Heart left ventricle (tissue), 16 donors: ENCODE measurements at regions of chr5 and their contacts with region 1.

Region 1: GRCh38 chr5:54844905-54845566 is 140.4 kb downstream of the ESM1 start:
- DNase-seq: no peak
- ATAC-seq: peak in 3 of 4 donors; percentile 34 to 52 (median 36)
- H3K4me3 ChIP-seq: peak overlapping the region in 9 of 12 donors; percentile 2 to 51 (median 28)
- H3K27ac ChIP-seq: peak overlapping the region in 1 of 12 donors; percentile 41
- H3K4me1 ChIP-seq: peaks cover 0 to 11% (median 5%) of the 10 kb centered on the region in 12 donors
- H3K27me3 ChIP-seq: no peaks in the 10 kb centered on the region
- CTCF ChIP-seq: peak; percentile 65 to 79 (median 70)
- POLR2A ChIP-seq: no peak

Region 2: GRCh38 chr5:54243473-54244080 is 601.5 kb before region 1 on chr5:
- intact Hi-C with region 1: loop called in 1 of 10 experiments (anchors 10 kb)
- DNase-seq: peak in 1 of 5 donors; percentile 15
- ATAC-seq: peak in 1 of 4 donors; percentile 47
- H3K4me3 ChIP-seq: no peak overlapping the region
- H3K27ac ChIP-seq: peak overlapping the region in 1 of 12 donors; percentile 6
- H3K4me1 ChIP-seq: peaks cover 0 to 41% (median 8%) of the 10 kb centered on the region in 12 donors
- H3K27me3 ChIP-seq: no peaks in the 10 kb centered on the region
- CTCF ChIP-seq: peak; percentile 37 to 75 (median 65)
- POLR2A ChIP-seq: no peak

Region 3: GRCh38 chr5:54590824-54591223 is 254.2 kb before region 1 on chr5:
- intact Hi-C with region 1: no loop called
- DNase-seq: no peak
- ATAC-seq: peak in 2 of 4 donors; percentile 50 to 66
- H3K4me3 ChIP-seq: no peak overlapping the region
- H3K27ac ChIP-seq: peak overlapping the region in 1 of 12 donors; percentile 42
- H3K4me1 ChIP-seq: peaks cover 0 to 23% (median 0%) of the 10 kb centered on the region in 12 donors
- H3K27me3 ChIP-seq: no peaks in the 10 kb centered on the region
- CTCF ChIP-seq: no peak
- POLR2A ChIP-seq: no peak

Region 4: GRCh38 chr5:54646356-54647101 is 198.5 kb before region 1 on chr5:
- intact Hi-C with region 1: loop called in 4 of 10 experiments (anchors 1 to 10 kb)
- DNase-seq: peak; percentile 78 to 92 (median 92)
- ATAC-seq: peak; percentile 91 to 97 (median 95)
- H3K4me3 ChIP-seq: peak overlapping the region in 6 of 12 donors; percentile 3 to 29 (median 8)
- H3K27ac ChIP-seq: peak overlapping the region; percentile 65 to 96 (median 76)
- H3K4me1 ChIP-seq: peaks cover 0 to 48% (median 23%) of the 10 kb centered on the region in 12 donors
- H3K27me3 ChIP-seq: no peaks in the 10 kb centered on the region
- CTCF ChIP-seq: peak in 2 of 12 donors; percentile 5 to 10
- POLR2A ChIP-seq: no peak

Region 5: GRCh38 chr5:54651482-54652076 is 193.5 kb before region 1 on chr5:
- intact Hi-C with region 1: loop called in 3 of 10 experiments (anchors 10 kb)
- DNase-seq: peak; percentile 80 to 93 (median 87)
- ATAC-seq: peak; percentile 36 to 69 (median 65)
- H3K4me3 ChIP-seq: no peak overlapping the region
- H3K27ac ChIP-seq: peak overlapping the region in 10 of 12 donors; percentile 7 to 83 (median 38)
- H3K4me1 ChIP-seq: peaks cover 0 to 49% (median 25%) of the 10 kb centered on the region in 12 donors
- H3K27me3 ChIP-seq: no peaks in the 10 kb centered on the region
- CTCF ChIP-seq: no peak
- POLR2A ChIP-seq: no peak

Region 6: GRCh38 chr5:54774281-54775170 is 70.5 kb before region 1 on chr5:
- intact Hi-C with region 1: loop called in 1 of 10 experiments (anchors 5 kb)
- DNase-seq: peak; percentile 66 to 84 (median 72)
- ATAC-seq: peak; percentile 88 to 97 (median 95)
- H3K4me3 ChIP-seq: peak overlapping the region in 2 of 12 donors; percentile 7 to 20
- H3K27ac ChIP-seq: peak overlapping the region in 4 of 12 donors; percentile 45 to 62 (median 47)
- H3K4me1 ChIP-seq: peaks cover 0 to 15% (median 0%) of the 10 kb centered on the region in 12 donors
- H3K27me3 ChIP-seq: no peaks in the 10 kb centered on the region
- CTCF ChIP-seq: no peak
- POLR2A ChIP-seq: no peak

Region 7: GRCh38 chr5:54785729-54786591 is 59.1 kb before region 1 on chr5:
- intact Hi-C with region 1: loop called in 1 of 10 experiments (anchors 10 kb)
- DNase-seq: peak; percentile 38 to 82 (median 74)
- ATAC-seq: peak; percentile 45 to 99 (median 97)
- H3K4me3 ChIP-seq: no peak overlapping the region
- H3K27ac ChIP-seq: peak overlapping the region in 9 of 12 donors; percentile 6 to 71 (median 45)
- H3K4me1 ChIP-seq: peaks cover 0 to 22% (median 13%) of the 10 kb centered on the region in 12 donors
- H3K27me3 ChIP-seq: no peaks in the 10 kb centered on the region
- CTCF ChIP-seq: peak in 4 of 12 donors; percentile 12 to 40 (median 18)
- POLR2A ChIP-seq: no peak